Naive thymus-derived CD4-positive, alpha-beta T cell (primary cell): ENCODE measurements at regions of chr3 and their contacts with region 1.

Region 1: GRCh38 chr3:192467230-192468140 is 259.9 kb downstream of the FGF12 start:
- DNase-seq: peak; percentile 7 to 45 (median 31)
- ATAC-seq: peak; percentile 83
- H3K4me3 ChIP-seq: no peak overlapping the region
- H3K4me3 Mint-ChIP-seq: peak overlapping the region in 1 of 10 donors; percentile 18
- H3K27ac ChIP-seq: no peak overlapping the region
- H3K27ac Mint-ChIP-seq: no peak overlapping the region
- H3K4me1 ChIP-seq: no peaks in the 10 kb centered on the region
- H3K4me1 Mint-ChIP-seq: peaks cover 0 to 4% (median 0%) of the 10 kb centered on the region in 7 donors
- H3K27me3 ChIP-seq: no peaks in the 10 kb centered on the region
- H3K27me3 Mint-ChIP-seq: peaks cover 11 to 26% (median 19%) of the 10 kb centered on the region in 5 donors

Region 2: DNA sequence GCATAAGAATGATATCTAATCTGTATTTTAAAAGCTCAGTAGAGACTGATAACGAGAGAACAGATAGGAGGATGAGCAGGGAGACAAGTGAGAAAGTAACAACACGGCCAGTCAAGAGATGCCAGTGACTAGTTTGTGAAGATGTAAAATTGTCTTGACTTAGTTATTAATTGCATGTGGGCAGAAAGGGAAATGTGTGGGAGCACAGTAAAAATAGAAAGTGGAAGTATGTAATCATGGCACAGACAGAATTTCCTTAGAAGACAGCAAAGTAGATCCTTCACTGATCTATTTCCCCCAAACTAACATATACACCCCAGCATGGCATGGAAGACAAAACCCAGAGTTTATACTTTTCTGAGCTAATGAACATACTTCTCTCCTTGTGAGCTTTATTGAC is 84.6 kb before region 1 on chr3:
- CTCF ChIA-PET with region 1: no interaction called
- POLR2A ChIA-PET with region 1: no interaction called
- intact Hi-C with region 1: no loop called
- DNase-seq: no peak
- ATAC-seq: no peak
- H3K4me3 ChIP-seq: no peak overlapping the region
- H3K4me3 Mint-ChIP-seq: no peak overlapping the region
- H3K27ac ChIP-seq: no peak overlapping the region
- H3K27ac Mint-ChIP-seq: no peak overlapping the region
- H3K4me1 ChIP-seq: no peaks in the 10 kb centered on the region
- H3K4me1 Mint-ChIP-seq: no peaks in the 10 kb centered on the region
- H3K27me3 ChIP-seq: no peaks in the 10 kb centered on the region
- H3K27me3 Mint-ChIP-seq: peaks cover 0 to 16% (median 0%) of the 10 kb centered on the region in 5 donors

Region 3: DNA sequence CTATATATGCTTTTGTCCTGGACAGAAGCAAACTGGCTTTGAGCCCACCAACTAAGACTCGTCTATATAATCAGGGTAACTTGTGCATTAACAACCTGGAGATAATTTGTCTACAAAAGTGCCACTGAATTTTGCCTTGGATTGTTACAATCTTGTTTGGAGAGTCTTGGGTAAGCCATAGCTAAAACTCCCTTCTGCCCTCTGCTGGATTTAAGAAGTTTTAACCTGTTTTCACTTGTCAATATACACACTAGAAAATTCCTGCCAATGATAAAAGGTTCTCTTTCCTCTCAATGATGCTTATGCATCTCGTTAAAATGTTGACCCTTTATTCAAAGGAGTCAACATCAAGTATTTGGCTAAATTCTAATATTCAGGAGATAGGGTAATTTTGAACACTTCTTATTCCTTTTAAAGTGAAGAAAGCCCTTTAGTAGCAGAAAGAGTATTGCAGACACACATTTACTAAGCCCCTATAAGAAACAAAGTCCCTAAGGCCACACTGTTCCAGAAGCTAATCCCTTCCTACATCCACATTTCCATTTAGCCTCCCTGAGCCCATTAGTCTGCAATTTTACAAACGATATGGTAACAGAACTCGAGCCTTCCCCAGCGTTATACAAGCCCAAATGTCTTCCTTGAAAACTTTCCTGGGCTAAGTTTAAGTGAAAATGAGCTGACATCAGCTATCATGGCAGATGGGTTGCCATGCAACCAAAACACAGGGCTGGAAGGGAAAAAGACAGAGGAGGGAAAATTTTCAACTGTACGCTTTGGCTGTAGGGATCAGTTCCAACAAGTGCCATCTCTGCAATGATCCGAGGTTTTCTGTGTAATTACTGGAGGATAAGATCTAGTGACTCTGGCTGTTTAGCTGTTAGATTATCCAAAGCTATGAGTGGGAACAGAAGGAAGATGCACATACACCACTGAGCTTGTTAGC is 335.7 kb after region 1 on chr3:
- CTCF ChIA-PET with region 1: no interaction called
- POLR2A ChIA-PET with region 1: no interaction called
- intact Hi-C with region 1: loop called in 1 of 2 experiments (anchors 1 kb)
- DNase-seq: peak in 1 of 9 donors; percentile 7
- ATAC-seq: no peak
- H3K4me3 ChIP-seq: no peak overlapping the region
- H3K4me3 Mint-ChIP-seq: no peak overlapping the region
- H3K27ac ChIP-seq: no peak overlapping the region
- H3K27ac Mint-ChIP-seq: no peak overlapping the region
- H3K4me1 ChIP-seq: no peaks in the 10 kb centered on the region
- H3K4me1 Mint-ChIP-seq: peaks cover 0 to 13% (median 0%) of the 10 kb centered on the region in 7 donors
- H3K27me3 ChIP-seq: no peaks in the 10 kb centered on the region
- H3K27me3 Mint-ChIP-seq: no peaks in the 10 kb centered on the region

Region 4: DNA sequence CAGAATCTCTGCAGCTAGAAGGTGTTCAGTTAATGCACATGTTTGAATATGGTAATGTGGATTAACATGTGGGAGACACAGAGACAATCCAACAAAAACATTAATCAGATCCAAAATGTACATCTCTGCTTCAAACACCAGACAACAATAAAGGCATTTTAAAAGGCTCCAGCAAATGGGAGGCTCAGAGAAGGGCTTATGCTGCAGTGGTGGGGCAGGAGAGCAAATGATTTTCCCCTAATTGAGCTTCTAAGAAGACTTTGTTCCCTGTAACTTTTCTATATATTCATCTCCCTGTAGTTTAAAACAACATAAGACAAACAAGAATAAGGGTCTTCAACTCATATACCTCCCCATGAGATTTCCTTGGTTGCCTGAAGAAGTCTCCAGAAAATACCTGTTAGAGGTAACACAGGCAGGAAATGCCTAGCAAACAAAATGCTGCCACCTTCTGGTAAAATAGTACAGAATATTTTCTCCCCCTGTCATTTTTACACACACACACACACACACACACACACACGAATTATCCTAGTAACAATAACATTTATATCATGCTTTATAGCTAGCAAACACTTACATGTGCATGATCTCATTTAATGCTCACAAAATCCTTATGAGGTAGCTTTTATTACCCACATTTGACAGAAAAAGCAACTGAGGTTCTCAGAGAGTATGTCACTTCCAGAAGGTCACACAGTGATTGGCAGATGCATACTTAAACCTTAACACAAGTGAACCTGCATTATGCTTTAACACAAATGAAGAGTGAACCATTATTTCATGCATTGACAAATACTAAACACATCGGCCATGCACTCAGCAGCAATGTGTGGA is 573.6 kb after region 1 on chr3:
- CTCF ChIA-PET with region 1: no interaction called
- POLR2A ChIA-PET with region 1: no interaction called
- intact Hi-C with region 1: loop called in 1 of 2 experiments (anchors 1 kb)
- DNase-seq: peak in 7 of 9 donors; percentile 13 to 50 (median 30)
- ATAC-seq: peak; percentile 26
- H3K4me3 ChIP-seq: no peak overlapping the region
- H3K4me3 Mint-ChIP-seq: no peak overlapping the region
- H3K27ac ChIP-seq: no peak overlapping the region
- H3K27ac Mint-ChIP-seq: no peak overlapping the region
- H3K4me1 ChIP-seq: no peaks in the 10 kb centered on the region
- H3K4me1 Mint-ChIP-seq: peaks cover 0 to 9% (median 0%) of the 10 kb centered on the region in 7 donors
- H3K27me3 ChIP-seq: no peaks in the 10 kb centered on the region
- H3K27me3 Mint-ChIP-seq: peaks cover 0 to 9% (median 0%) of the 10 kb centered on the region in 5 donors